Head of caudate nucleus (tissue), 42 donors: ENCODE measurements at regions of chr12 and their contacts with region 1.

Region 1: DNA sequence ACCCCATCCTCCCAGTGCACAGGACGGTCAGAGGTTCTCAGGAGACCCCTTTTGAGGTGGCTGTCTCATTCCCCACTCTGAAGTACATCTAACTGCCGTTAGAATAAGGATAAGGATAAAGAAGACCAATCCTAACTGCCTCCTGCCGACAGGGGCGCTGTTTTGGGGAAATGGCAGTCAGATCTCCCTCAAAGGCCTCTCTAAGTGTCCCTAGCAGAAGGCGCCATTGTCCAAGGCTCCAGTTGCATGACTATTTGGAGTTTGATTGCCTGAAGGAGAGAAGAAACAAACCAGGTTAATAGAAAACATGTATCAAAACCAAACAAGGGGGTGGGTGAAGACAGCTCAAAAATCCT is 29.1 kb upstream of the KLRB1 start:
- DNase-seq: no peak

Region 2: DNA sequence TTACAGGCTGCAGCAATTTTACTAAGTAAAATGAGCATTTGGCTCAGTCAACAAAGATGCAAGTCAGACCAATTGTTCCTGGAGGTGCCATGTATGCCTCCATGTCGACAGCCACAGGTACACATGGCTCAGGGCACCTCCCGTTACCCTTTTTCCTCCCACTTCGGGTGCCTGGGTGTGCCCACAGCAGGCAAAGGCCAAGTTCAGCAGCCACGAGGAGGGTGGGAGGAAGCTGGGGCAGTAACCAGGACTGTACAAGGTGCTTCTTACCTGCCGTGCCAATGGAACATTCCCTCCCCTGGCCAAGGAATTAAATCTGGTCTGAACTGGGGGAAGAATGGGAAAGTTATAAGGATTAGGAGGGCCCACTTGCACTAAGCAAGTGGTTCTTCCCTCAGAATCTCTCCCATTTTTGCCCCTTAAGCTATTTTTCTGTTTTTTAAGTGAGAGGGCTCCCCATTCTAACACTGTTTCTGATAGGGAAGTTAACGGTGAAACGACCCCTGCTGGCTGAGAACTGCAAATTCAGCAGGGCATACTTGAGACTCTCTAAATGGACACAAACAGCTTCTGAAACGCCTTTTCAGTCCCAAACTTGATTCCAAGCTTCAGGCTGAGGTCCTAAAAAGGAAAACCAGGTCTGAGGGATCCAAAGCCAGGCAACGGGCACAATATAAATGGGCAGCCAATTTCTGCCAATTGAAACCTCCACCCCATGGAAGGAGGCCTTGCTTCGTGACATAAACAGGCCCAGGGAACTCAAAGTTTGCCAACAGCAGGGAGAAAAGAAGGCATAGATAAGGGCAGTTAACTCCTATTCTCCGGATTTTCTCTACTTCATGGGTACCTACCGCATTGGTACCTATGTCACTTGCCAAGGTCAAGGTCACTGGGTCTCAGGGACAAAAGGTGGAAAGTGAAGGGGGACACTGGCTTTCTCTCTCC is 71.3 kb after region 1 on chr12:
- intact Hi-C with region 1: loop called (anchors 5 kb)
- DNase-seq: peak in 41 of 42 donors; percentile 21 to 80 (median 58)